Activated CD4-positive, alpha-beta T cell treated with anti-CD3 and anti-CD28 coated beads for 36 hours (primary cell): ENCODE measurements at regions of chr15 and their contacts with region 1.

Region 1: GRCh38 chr15:62254137-62254934 is 89.3 kb upstream of the C2CD4B start:
- DNase-seq: peak; percentile 86
- ATAC-seq: peak; percentile 73
- H3K4me3 Mint-ChIP-seq: no peak overlapping the region
- H3K27ac Mint-ChIP-seq: no peak overlapping the region
- H3K4me1 Mint-ChIP-seq: no peaks in the 10 kb centered on the region
- H3K27me3 Mint-ChIP-seq: peaks cover 3% of the 10 kb centered on the region

Region 2: GRCh38 chr15:61871926-61872522 is 382.3 kb before region 1 on chr15:
- CTCF ChIA-PET with region 1: interaction called, 3 read pairs
- POLR2A ChIA-PET with region 1: no interaction called
- intact Hi-C with region 1: loop called in 1 of 2 experiments (anchors 1 kb)
- DNase-seq: no peak
- ATAC-seq: no peak
- H3K4me3 Mint-ChIP-seq: no peak overlapping the region
- H3K27ac Mint-ChIP-seq: no peak overlapping the region
- H3K4me1 Mint-ChIP-seq: no peaks in the 10 kb centered on the region
- H3K27me3 Mint-ChIP-seq: no peaks in the 10 kb centered on the region

Region 3: DNA sequence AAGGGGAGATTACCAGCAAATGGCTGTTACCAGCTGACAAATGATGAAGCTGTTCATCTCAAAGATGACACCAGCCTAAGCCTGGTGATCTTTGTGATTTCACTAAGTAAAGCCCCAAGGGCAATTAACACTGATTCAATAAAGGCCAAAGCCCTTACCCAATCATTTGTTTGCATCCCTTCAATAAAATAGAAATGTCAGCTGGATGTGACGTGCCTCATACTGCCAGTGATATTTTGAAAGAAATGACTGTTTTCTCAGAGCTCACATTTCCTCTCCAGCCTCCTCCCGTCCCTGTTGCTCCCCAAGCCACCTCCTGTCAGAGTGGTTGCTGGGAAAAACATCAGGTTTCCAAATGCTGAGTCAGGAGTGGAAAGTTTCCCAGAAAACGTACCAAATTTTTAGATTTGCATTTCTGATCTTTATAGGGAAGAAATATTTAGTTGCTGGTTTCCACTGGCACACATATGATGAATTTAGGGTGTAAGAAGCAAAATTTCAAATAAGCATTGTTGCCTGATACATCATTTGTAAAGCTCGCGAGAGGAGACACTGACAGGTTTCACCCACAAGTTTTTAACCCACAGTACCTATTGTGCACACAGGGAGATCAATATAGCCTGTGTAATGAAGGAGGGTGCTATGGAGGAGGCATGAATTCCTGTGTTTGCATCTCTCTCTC is 166.5 kb before region 1 on chr15:
- CTCF ChIA-PET with region 1: no interaction called
- POLR2A ChIA-PET with region 1: no interaction called
- intact Hi-C with region 1: loop called in 1 of 2 experiments (anchors 10 kb)
- DNase-seq: no peak
- ATAC-seq: peak; percentile 47
- H3K4me3 Mint-ChIP-seq: no peak overlapping the region
- H3K27ac Mint-ChIP-seq: no peak overlapping the region
- H3K4me1 Mint-ChIP-seq: no peaks in the 10 kb centered on the region
- H3K27me3 Mint-ChIP-seq: peaks cover 2% of the 10 kb centered on the region

Region 4: GRCh38 chr15:62125773-62126172 is 128.6 kb before region 1 on chr15:
- CTCF ChIA-PET with region 1: interaction called, 7 read pairs
- POLR2A ChIA-PET with region 1: no interaction called
- intact Hi-C with region 1: loop called in 1 of 2 experiments (anchors 5 kb)
- DNase-seq: no peak
- ATAC-seq: no peak
- H3K4me3 Mint-ChIP-seq: no peak overlapping the region
- H3K27ac Mint-ChIP-seq: no peak overlapping the region
- H3K4me1 Mint-ChIP-seq: peaks cover 54% of the 10 kb centered on the region
- H3K27me3 Mint-ChIP-seq: no peaks in the 10 kb centered on the region

Region 5: GRCh38 chr15:62208367-62208766 is 46.0 kb before region 1 on chr15:
- CTCF ChIA-PET with region 1: no interaction called
- POLR2A ChIA-PET with region 1: no interaction called
- intact Hi-C with region 1: no loop called
- DNase-seq: no peak
- ATAC-seq: no peak
- H3K4me3 Mint-ChIP-seq: no peak overlapping the region
- H3K27ac Mint-ChIP-seq: no peak overlapping the region
- H3K4me1 Mint-ChIP-seq: peaks cover 8% of the 10 kb centered on the region
- H3K27me3 Mint-ChIP-seq: peaks cover 6% of the 10 kb centered on the region